ENCODE measurements at regions of chr6 and their contacts with region 1.

Region 1: GRCh38 chr6:43143235-43144124 is 27.6 kb upstream of the SRF start:
- DNase-seq: peak; percentile 64 to 90 (median 79)
- ATAC-seq: peak; percentile 74
- H3K4me3 ChIP-seq: peak overlapping the region; percentile 40 to 48
- H3K4me3 Mint-ChIP-seq: peak overlapping the region; percentile 87
- H3K27ac ChIP-seq: peak overlapping the region; percentile 67 to 73
- H3K27ac Mint-ChIP-seq: peak overlapping the region; percentile 99
- H3K4me1 ChIP-seq: peaks cover 30% of the 10 kb centered on the region
- H3K4me1 Mint-ChIP-seq: peaks cover 32% of the 10 kb centered on the region
- H3K27me3 ChIP-seq: no peaks in the 10 kb centered on the region
- H3K27me3 Mint-ChIP-seq: no peaks in the 10 kb centered on the region
- CTCF ChIP-seq: peak; percentile 80

Region 2: DNA sequence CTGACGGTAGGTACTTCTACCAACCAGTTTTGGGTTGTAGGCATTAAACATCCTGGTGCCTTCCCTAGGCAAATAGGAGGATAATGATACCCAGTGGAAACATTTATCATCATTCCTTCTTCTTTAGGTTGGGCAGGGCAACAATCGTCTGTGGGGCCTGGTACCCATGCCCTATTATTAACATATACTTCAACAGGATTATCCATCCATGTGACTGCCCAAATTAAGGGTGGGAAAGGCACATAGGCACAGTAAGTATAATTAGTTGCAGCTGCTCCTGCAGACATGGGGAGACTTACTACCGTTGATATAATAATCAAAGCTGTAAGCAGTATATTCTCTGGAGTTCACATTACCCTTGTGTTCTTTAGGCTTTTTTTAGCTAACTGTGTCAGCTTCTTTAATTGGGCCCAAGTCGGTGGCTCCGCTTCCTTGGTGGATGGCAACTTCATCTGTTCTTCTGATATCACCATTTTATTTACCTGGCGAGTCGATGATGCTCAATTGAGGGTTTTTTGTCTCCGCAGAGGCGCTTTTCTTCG is 247.2 kb before region 1 on chr6:
- CTCF ChIA-PET with region 1: interaction called, 124 read pairs
- POLR2A ChIA-PET with region 1: interaction called, 10 read pairs
- intact Hi-C with region 1: loop called (anchors 1 kb)
- DNase-seq: no peak
- ATAC-seq: no peak
- H3K4me3 ChIP-seq: no peak overlapping the region
- H3K4me3 Mint-ChIP-seq: no peak overlapping the region
- H3K27ac ChIP-seq: no peak overlapping the region
- H3K27ac Mint-ChIP-seq: no peak overlapping the region
- H3K4me1 ChIP-seq: peaks cover 4% of the 10 kb centered on the region
- H3K4me1 Mint-ChIP-seq: peaks cover 6% of the 10 kb centered on the region
- H3K27me3 ChIP-seq: no peaks in the 10 kb centered on the region
- H3K27me3 Mint-ChIP-seq: no peaks in the 10 kb centered on the region
- CTCF ChIP-seq: no peak

Region 3: DNA sequence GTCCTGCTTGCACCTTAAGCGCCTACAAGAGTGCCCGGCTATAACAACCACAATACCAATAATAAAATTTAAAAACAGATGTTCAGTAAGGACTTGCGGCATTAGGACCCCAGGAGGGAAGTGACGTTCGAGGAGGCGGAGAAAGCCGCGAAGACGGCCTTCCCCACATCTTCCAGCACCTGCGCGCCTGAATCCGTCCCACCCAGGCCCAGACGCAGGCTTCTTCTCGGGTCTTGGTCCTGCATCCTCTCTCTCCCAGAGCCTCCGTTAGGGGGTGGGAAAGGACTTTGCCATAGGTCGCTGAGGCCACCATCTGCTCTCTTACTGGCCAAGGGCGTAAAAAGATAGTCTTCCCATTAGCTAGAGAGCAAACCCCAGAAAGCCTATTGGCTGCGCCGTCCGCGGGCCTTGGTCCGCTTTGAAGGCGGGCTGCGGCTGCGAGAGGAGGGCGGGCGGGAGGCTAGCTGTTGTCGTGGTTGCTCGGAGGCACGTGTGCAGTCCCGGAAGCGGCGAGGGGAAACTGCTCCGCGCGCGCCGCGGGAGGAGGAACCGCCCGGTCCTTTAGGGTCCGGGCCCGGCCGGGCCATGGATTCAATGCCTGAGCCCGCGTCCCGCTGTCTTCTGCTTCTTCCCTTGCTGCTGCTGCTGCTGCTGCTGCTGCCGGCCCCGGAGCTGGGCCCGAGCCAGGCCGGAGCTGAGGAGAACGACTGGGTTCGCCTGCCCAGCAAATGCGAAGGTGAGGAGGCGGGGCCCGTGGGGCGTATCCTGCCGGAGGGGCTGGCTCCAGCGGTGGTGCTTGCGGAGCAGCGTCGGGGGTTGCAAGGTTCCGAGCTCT is 214.3 kb before region 1 on chr6 and contains the start of gene CNPY3:
- CTCF ChIA-PET with region 1: interaction called, 15 read pairs
- POLR2A ChIA-PET with region 1: interaction called, 22 read pairs
- intact Hi-C with region 1: loop called in 1 of 2 experiments (anchors 1 kb)
- DNase-seq: peak; percentile 91 to 98 (median 94)
- ATAC-seq: peak; percentile 77
- H3K4me3 ChIP-seq: peak within 1 kb of the TSS; percentile 70 to 82
- H3K4me3 Mint-ChIP-seq: peak within 1 kb of the TSS; percentile 99
- H3K27ac ChIP-seq: peak within 1 kb of the TSS; percentile 93 to 95
- H3K27ac Mint-ChIP-seq: peak within 1 kb of the TSS; percentile 98
- H3K4me1 ChIP-seq: peaks cover 43% of the 10 kb centered on the region
- H3K4me1 Mint-ChIP-seq: peaks cover 45% of the 10 kb centered on the region
- H3K27me3 ChIP-seq: no peaks in the 10 kb centered on the region
- H3K27me3 Mint-ChIP-seq: no peaks in the 10 kb centered on the region
- CTCF ChIP-seq: no peak
- total RNA-seq, gene CNPY3: 43.9 to 47.4 TPM

Region 4: DNA sequence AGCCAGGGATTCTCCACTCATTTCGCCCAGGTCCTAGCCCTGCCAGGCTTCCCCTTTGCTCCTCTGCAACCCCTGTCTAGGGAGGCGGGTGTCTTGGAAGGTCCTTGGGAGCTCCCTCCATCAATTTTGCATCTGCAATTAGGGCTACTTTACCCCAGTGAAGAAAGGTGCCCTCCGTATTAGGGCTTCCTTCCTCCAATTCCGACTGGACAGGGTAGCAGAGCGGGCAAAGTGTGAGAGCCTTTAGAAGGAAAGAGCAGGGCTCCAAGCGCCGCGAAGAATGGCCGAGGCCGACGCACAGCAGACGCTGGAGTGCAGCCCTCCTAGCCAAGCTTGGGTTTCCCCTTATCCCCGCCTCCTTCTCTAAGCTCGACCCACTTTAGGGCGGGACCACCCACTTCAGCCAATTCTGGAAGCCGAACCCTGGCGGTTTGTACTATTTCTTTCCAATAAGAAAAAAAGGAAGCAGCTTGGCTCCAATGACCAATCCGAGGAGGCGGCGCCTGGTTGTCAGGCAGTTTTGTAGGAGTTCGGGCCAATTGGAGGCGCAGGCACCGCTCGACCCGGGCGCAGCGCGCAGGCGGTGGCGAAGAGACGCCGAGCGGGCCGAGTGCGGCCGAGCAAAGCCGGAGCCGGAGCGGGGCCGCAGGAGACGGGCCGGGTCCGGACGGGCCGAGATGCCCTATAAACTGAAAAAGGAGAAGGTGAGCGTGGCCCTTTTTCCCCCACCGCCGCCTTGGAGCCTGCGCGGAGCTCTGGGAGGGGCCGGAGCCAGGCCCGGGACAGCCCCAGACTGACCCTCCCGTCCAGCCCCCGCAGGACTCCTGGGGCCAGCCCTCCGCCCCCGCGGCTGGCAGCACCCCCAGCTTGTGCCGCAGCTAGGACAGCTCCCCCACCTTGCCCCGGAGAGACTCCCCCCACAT is 159.2 kb before region 1 on chr6 and contains the start of gene PPP2R5D:
- CTCF ChIA-PET with region 1: interaction called, 4 read pairs
- POLR2A ChIA-PET with region 1: interaction called, 18 read pairs
- intact Hi-C with region 1: loop called (anchors 1 to 2 kb)
- DNase-seq: peak; percentile 93 to 99 (median 96)
- ATAC-seq: peak; percentile 93
- H3K4me3 ChIP-seq: peak within 1 kb of the TSS; percentile 81 to 86
- H3K4me3 Mint-ChIP-seq: peak within 1 kb of the TSS; percentile 94
- H3K27ac ChIP-seq: peak within 1 kb of the TSS; percentile 78 to 86
- H3K27ac Mint-ChIP-seq: peak within 1 kb of the TSS; percentile 95
- H3K4me1 ChIP-seq: peaks cover 44% of the 10 kb centered on the region
- H3K4me1 Mint-ChIP-seq: peaks cover 62% of the 10 kb centered on the region
- H3K27me3 ChIP-seq: no peaks in the 10 kb centered on the region
- H3K27me3 Mint-ChIP-seq: no peaks in the 10 kb centered on the region
- CTCF ChIP-seq: no peak
- total RNA-seq, gene PPP2R5D: 14.1 to 19.5 TPM

Region 5: DNA sequence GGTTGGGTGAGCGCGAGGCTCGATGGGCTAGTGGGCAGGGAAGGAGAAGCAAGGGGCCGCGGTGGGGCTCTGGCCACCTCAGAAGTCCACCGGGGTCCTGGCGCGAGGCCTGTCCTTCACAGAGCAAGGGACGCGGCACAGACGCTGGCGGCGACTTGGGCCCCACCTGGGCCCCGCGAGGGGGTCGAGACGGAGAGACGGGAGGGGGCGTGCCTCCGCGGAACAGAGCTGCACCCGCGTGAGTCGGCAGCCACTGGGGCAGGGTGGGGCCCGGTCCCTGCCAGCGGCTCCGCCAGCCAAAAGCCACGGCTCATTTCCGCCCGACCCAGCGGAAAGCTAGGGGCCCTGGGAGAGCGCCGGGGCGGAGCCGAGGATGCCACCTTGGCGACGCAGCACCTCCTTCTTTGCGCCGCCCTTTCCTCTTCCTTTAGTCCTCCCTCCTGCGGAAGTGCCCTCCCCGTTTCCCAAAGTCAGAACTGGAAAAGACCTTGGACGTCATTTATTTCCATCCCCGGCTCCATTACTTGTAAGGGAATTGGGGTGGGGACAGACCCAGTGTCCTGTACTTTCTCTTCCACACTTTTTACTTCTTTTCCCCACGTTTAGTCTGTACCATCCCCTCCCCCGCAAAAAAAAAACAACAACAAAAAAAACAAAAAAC is 89.8 kb before region 1 on chr6 and contains the start of gene CUL7:
- CTCF ChIA-PET with region 1: interaction called, 4 read pairs
- POLR2A ChIA-PET with region 1: interaction called, 8 read pairs
- intact Hi-C with region 1: loop called (anchors 1 kb)
- DNase-seq: peak; percentile 71 to 94 (median 91)
- ATAC-seq: peak; percentile 99
- H3K4me3 ChIP-seq: peak within 1 kb of the TSS; percentile 81 to 83
- H3K4me3 Mint-ChIP-seq: peak within 1 kb of the TSS; percentile 92
- H3K27ac ChIP-seq: peak within 1 kb of the TSS; percentile 79 to 89
- H3K27ac Mint-ChIP-seq: peak within 1 kb of the TSS; percentile 97
- H3K4me1 ChIP-seq: peaks cover 25% of the 10 kb centered on the region
- H3K4me1 Mint-ChIP-seq: peaks cover 48% of the 10 kb centered on the region
- H3K27me3 ChIP-seq: no peaks in the 10 kb centered on the region
- H3K27me3 Mint-ChIP-seq: no peaks in the 10 kb centered on the region
- CTCF ChIP-seq: no peak
- total RNA-seq, gene CUL7: 5.2 to 5.4 TPM

Region 6: DNA sequence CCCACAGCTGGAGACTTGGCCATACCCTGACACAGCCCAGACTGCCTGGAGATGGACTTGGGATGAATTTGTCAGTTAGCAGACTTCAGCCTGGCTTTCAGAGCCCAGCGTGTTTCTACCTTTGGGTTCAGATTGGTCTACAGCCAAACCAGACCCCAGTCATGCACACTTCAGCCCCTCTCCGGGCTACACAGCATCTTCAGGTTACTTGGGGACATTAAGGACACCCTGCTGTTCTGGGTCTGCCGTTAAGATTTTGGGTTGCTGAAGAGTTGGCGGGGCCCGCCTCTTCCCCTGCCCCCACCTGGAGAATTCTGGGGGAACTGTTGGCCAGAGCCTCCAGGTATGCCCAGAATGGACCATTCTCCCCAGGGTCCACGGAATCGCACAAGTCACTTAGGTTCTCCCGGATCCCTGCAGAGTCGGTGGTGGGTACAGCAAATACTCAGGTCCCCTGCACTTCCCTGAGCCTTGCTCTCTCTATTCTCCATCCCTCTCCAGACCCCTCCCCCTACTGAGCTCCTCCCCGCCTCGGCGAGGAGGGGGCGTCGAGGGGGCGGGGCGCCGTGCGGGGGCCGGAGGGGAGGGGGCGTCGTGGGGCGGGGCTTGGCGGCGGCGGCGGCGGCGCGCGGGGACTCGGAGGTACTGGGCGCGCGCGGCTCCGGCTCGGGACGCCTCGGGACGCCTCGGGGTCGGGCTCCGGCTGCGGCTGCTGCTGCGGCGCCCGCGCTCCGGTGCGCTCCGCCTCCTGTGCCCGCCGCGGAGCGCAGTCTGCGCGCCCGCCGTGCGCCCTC is 67.6 kb before region 1 on chr6 and contains the start of gene PTK7:
- CTCF ChIA-PET with region 1: interaction called, 15 read pairs
- POLR2A ChIA-PET with region 1: no interaction called
- intact Hi-C with region 1: no loop called
- DNase-seq: peak in 2 of 9 experiments; percentile 40 to 49
- ATAC-seq: peak; percentile 61
- H3K4me3 ChIP-seq: peak within 1 kb of the TSS; percentile 34 to 45
- H3K4me3 Mint-ChIP-seq: peak within 1 kb of the TSS; percentile 65
- H3K27ac ChIP-seq: no peak within 1 kb of the TSS
- H3K27ac Mint-ChIP-seq: no peak within 1 kb of the TSS
- H3K4me1 ChIP-seq: peaks cover 17% of the 10 kb centered on the region
- H3K4me1 Mint-ChIP-seq: peaks cover 10% of the 10 kb centered on the region
- H3K27me3 ChIP-seq: peaks cover 5 to 11% of the 10 kb centered on the region in 2 experiments
- H3K27me3 Mint-ChIP-seq: peaks cover 10% of the 10 kb centered on the region
- CTCF ChIP-seq: no peak
- total RNA-seq, gene PTK7: 9.9 to 11.5 TPM

Region 7: DNA sequence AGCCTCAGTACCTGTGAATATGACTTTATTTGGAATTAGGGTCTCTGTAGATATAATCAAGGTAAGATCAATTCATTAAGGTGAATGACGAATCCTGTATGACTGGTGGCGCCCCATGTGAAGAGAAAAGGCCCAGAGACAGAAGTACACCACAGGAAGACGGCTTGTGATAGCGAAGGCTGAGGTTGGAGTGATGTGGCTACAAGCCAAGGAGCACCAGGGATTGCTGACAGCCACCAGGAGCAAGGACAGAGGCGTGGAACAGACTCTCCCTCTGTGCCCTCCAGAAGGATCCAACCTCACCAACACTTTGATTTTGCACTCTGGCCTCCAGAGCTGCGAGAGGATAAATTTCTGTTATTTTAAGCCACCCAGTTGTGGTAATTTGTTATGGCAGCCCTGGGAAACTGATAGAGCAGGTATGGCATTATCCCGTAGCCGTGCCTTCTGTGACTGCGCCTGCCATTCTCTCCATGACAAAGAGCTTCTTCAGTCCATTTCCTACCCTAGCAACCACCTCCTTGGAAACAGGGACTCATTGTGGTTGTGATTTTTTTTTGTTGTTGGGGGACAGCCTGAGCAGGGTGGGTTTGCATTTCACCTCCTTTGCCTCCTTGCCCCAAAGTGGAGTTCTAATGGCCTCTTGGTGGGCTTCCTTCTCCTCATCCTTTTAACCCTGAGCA is 37.8 kb before region 1 on chr6:
- CTCF ChIA-PET with region 1: no interaction called
- POLR2A ChIA-PET with region 1: no interaction called
- intact Hi-C with region 1: no loop called
- DNase-seq: no peak
- ATAC-seq: no peak
- H3K4me3 ChIP-seq: no peak overlapping the region
- H3K4me3 Mint-ChIP-seq: no peak overlapping the region
- H3K27ac ChIP-seq: no peak overlapping the region
- H3K27ac Mint-ChIP-seq: peak overlapping the region; percentile 76
- H3K4me1 ChIP-seq: no peaks in the 10 kb centered on the region
- H3K4me1 Mint-ChIP-seq: peaks cover 3% of the 10 kb centered on the region
- H3K27me3 ChIP-seq: no peaks in the 10 kb centered on the region
- H3K27me3 Mint-ChIP-seq: no peaks in the 10 kb centered on the region
- CTCF ChIP-seq: no peak

Measured in CD8-positive, alpha-beta T cell (primary cell).